Ascending aorta (tissue), 2 donors: ENCODE measurements at regions of chr4 and their contacts with region 1.

Region 1: GRCh38 chr4:158155656-158156356 is 17.0 kb downstream of the GASK1B start:
- DNase-seq: no peak
- H3K4me3 ChIP-seq: no peak overlapping the region
- H3K27ac ChIP-seq: peak overlapping the region in 1 of 2 donors; percentile 39
- H3K4me1 ChIP-seq: peaks cover 0 to 31% of the 10 kb centered on the region in 2 donors
- H3K27me3 ChIP-seq: no peaks in the 10 kb centered on the region
- CTCF ChIP-seq: no peak

Region 2: GRCh38 chr4:158131027-158131426 is 24.8 kb before region 1 on chr4:
- intact Hi-C with region 1: loop called (anchors 2 kb)
- DNase-seq: no peak
- H3K4me3 ChIP-seq: no peak overlapping the region
- H3K27ac ChIP-seq: peak overlapping the region; percentile 36 to 54
- H3K4me1 ChIP-seq: peaks cover 0 to 14% of the 10 kb centered on the region in 2 donors
- H3K27me3 ChIP-seq: no peaks in the 10 kb centered on the region
- CTCF ChIP-seq: no peak